ENCODE measurements at regions of chr7 and their contacts with region 1.

Region 1: DNA sequence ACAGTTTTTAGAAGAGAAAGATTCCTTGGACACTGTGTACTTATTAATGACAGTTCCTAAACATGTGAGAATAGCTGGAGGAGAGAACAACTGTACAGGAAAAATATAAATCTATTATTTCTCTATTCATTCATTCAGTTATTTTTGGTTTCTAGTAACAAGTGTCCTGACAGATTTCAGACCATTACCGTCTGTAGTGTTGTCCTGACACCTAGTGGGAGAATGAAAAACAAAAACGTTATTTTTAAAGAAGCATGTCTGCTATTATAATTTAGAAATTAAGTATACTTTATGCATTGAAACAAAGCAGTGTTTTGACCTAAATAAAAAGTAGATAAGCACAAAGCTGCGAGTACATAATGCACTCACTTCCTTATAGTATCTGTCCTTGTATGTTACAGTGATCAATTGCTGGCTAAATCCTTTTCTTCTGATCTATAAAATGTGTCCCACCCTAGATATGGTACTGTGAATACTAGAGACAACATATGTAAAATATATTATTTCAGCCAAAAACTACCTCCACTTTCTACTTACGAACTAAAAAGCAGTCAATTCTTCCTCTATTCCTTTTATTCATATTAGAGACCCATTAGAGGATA is 575.6 kb downstream of the ARL4A start:
- DNase-seq: peak in 3 of 42 donors; percentile 3 to 37 (median 36)

Region 2: DNA sequence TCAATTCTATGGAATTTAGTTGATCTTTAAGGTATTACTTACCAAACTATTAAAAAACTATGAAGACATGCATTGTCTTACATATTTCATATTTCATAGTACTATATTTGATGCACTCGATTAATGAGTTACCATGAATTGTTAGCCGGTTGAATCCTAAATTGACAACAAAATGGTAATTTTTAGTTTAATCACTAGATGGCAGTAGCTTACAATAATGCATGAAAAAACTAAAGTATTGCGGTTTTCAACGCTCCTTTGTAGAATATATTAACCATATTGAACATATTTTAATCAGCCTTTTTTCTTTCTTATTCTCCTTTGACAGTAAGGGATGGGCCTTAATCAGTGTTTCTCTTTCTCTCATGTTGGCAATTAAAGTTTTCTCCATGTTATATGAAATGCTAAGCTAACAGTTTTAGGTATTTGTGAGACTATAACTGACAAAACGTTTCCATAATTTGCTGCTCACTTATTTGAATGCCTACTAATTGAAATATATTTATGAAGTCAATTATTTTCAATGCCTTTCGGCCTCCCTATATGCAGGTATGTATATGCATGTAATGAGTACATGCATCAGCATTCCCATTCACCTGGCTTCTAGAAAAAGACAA is 624.1 kb before region 1 on chr7:
- intact Hi-C with region 1: loop called (anchors 5 kb)
- DNase-seq: no peak

Region 3: GRCh38 chr7:12686894-12687717 is 575.9 kb before region 1 on chr7 and contains the start of gene ARL4A:
- intact Hi-C with region 1: loop called (anchors 5 kb)
- DNase-seq: peak; percentile 93 to 99 (median 98)

Region 4: DNA sequence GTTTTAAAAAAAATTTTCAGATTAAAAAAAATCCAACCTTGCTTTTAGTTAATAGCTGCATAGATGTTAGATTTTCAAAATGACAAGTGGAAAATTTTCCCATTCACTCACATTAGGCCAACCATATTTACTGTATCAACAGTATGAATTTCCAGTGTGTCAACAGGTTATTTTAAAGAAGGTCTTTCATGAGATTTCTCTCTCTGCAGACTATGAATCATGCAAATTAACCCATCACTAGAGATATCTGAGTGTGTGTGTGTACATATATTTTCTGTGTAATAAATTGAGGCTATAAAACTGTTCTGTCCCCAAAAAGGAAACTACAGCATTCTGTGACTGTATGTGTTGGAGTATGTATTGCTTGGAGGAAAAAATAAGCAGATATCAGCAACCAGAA is 270.0 kb before region 1 on chr7:
- intact Hi-C with region 1: no loop called
- DNase-seq: no peak

Region 5: DNA sequence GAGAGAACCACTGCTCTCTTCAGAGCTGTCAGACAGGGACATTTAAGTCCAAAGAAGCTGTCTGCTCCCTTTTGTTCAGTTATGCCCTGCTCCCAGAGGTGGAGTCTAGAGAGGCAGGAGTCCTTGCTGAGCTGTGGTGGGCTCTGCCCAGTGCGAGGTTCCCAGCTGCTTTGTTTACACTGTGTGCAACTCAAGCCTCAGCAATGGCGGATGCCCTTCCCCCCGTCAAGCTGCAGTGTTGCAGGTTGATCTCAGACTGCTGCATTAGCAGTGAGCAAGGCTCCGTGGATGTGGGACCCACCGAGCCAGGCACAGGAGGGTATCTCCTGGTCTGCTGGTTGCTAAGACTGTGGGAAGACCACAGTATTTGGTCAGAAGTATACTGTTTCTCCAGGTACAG is 136.7 kb before region 1 on chr7:
- intact Hi-C with region 1: no loop called
- DNase-seq: no peak

Region 6: DNA sequence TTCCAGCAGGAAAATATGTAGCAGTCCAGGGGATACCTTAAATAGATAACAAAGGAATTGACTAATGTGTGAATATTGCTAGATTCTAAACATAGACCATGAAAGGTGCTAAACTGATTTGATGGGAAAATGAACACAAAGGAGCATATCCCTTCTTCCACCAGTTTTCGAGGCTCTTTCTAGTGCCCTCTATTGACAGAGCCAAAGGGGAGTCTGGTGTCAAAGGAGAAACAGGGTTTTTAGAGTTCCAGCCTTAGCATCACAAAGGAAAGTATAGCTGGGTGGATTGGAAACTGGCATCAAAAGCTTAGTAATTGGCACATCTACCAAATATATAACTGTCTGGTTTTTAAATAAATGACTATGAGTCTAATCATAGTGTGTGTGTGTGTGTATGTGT is 89.6 kb after region 1 on chr7:
- intact Hi-C with region 1: no loop called
- DNase-seq: no peak